ENCODE measurements at regions of chr6 and their contacts with region 1.

Region 1: DNA sequence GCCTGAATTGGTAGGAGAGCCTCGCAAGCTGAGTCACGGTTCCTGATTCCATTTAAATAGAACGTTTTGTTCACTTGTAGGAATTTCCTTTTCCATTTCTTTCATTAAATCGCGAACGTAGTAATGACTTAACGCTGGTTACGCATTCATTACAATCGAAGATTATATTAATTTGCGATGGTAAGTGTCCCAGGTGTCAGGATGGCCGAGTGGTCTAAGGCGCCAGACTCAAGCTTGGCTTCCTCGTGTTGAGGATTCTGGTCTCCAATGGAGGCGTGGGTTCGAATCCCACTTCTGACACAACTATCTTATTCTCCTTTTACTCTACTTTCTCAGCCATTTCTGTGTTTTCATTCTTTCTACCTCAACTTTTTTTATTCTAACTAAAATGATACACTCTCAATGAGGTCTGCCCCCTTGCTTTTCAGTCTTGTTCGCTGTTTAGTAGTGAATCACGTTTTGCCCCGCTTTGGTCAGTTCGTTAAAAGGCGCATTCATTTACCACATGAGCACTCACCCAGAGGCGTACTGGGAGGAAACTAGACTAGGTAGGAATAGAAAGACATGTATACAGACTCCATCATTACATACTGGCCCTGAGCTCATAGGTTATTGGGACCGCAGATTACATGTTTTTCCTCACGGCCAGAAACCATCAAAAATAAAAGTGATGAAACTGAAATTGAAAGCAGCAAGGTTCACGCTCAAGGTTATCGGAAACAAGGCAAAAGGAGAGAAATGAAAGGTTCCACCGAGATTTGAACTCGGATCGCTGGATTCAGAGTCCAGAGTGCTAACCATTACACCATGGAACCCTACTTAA is 17.3 kb upstream of the TRIM27 start:
- DNase-seq: peak; percentile 87
- H3K4me3 Mint-ChIP-seq: peak overlapping the region; percentile 94
- H3K27ac Mint-ChIP-seq: peak overlapping the region; percentile 97
- H3K4me1 Mint-ChIP-seq: peaks cover 45% of the 10 kb centered on the region
- H3K27me3 Mint-ChIP-seq: peaks cover 11% of the 10 kb centered on the region
- CTCF ChIP-seq: no peak

Region 2: DNA sequence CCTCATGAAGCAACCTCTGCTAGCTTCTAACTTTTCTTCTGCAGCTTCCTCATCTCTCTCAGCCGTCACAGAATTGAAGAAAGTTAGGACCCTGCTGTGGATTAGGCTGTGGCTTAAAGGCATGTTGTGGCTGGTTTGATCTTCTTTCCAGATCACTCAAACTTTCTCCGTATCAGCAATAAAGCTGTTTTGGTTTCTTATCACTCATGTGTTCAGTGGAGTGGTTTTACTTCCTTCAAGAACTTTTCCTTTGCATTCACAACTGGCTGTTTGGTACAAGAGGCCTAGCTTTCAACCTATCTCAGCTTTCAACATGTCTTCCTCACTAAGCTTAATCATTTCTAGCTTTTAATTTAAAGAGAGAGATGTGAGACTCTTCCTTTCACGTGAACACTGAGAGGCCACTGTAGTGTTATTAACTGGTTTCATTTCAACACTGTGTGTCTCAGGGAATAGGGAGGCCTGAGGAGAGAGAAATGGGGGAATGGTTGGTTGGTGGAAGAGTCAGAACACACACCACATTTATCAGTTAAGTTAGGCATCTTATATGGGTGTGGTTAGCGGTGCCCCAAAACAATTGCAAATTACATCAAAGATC is 515.0 kb before region 1 on chr6:
- CTCF ChIA-PET with region 1: no interaction called
- intact Hi-C with region 1: no loop called
- DNase-seq: no peak
- H3K4me3 Mint-ChIP-seq: no peak overlapping the region
- H3K27ac Mint-ChIP-seq: no peak overlapping the region
- H3K4me1 Mint-ChIP-seq: no peaks in the 10 kb centered on the region
- H3K27me3 Mint-ChIP-seq: peaks cover 10% of the 10 kb centered on the region
- CTCF ChIP-seq: no peak

Region 3: GRCh38 chr6:28725890-28726348 is 215.2 kb before region 1 on chr6:
- CTCF ChIA-PET with region 1: no interaction called
- intact Hi-C with region 1: loop called (anchors 10 kb)
- DNase-seq: peak; percentile 38
- H3K4me3 Mint-ChIP-seq: no peak overlapping the region
- H3K27ac Mint-ChIP-seq: no peak overlapping the region
- H3K4me1 Mint-ChIP-seq: no peaks in the 10 kb centered on the region
- H3K27me3 Mint-ChIP-seq: peaks cover under 1% of the 10 kb centered on the region
- CTCF ChIP-seq: no peak

Region 4: GRCh38 chr6:28863604-28864320 is 77.3 kb before region 1 on chr6:
- CTCF ChIA-PET with region 1: no interaction called
- intact Hi-C with region 1: loop called (anchors 5 kb)
- DNase-seq: peak; percentile 89
- H3K4me3 Mint-ChIP-seq: peak overlapping the region; percentile 94
- H3K27ac Mint-ChIP-seq: peak overlapping the region; percentile 95
- H3K4me1 Mint-ChIP-seq: peaks cover 23% of the 10 kb centered on the region
- H3K27me3 Mint-ChIP-seq: peaks cover 14% of the 10 kb centered on the region
- CTCF ChIP-seq: no peak

Region 5: GRCh38 chr6:28895134-28895812 is 45.8 kb before region 1 on chr6:
- CTCF ChIA-PET with region 1: interaction called, 4 read pairs
- intact Hi-C with region 1: loop called (anchors 2 kb)
- DNase-seq: peak; percentile 90
- H3K4me3 Mint-ChIP-seq: peak overlapping the region; percentile 95
- H3K27ac Mint-ChIP-seq: peak overlapping the region; percentile 100
- H3K4me1 Mint-ChIP-seq: no peaks in the 10 kb centered on the region
- H3K27me3 Mint-ChIP-seq: no peaks in the 10 kb centered on the region
- CTCF ChIP-seq: no peak

Region 6: DNA sequence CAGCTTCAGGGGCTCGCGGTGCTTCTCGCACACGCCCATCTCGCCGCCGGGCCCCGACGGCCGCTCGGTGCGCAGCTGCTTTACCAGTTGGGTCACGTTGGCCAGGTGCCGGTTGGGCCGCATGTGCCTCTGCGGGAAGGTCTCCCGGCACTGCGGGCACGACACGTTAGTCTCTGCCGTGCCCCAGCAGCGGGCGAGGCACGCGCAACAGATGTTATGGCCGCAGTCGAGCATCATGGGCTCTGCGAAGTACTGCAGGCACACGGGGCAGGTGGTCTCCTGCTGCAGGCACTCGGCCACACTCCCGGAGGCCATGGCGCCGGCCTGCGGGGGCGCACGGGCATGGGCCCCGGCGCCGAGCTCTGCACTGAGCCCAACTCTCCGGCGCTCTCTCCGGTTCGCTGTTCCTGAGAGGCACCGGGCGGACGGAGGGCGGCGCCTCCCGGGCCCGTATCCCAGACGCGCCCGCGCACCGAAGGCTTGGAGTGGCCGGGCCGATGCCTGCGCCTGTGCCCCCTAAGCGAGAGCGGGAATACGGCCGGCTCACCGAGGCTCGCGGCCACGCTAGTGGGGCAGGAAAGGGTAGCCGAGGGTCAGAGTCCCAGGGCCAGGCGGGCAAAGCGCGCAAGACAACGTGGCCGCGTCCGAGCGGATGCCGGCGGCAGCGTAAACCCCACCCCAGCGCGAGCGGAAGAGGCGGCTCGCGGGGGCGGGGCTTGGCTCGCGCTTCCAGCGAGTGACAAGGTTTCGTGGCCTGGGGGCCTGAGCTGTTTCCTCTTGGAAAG is 17.6 kb before region 1 on chr6 and contains the start of gene TRIM27:
- CTCF ChIA-PET with region 1: interaction called, 5 read pairs
- intact Hi-C with region 1: loop called (anchors 2 kb)
- DNase-seq: peak; percentile 95
- H3K4me3 Mint-ChIP-seq: peak within 1 kb of the TSS; percentile 96
- H3K27ac Mint-ChIP-seq: peak within 1 kb of the TSS; percentile 98
- H3K4me1 Mint-ChIP-seq: peaks cover 27% of the 10 kb centered on the region
- H3K27me3 Mint-ChIP-seq: no peaks in the 10 kb centered on the region
- CTCF ChIP-seq: no peak
- total RNA-seq, gene TRIM27: 85.8 and 91.6 TPM in 2 replicates

Region 7: GRCh38 chr6:28969129-28969528 is 28.1 kb after region 1 on chr6:
- CTCF ChIA-PET with region 1: no interaction called
- intact Hi-C with region 1: no loop called
- DNase-seq: no peak
- H3K4me3 Mint-ChIP-seq: no peak overlapping the region
- H3K27ac Mint-ChIP-seq: no peak overlapping the region
- H3K4me1 Mint-ChIP-seq: no peaks in the 10 kb centered on the region
- H3K27me3 Mint-ChIP-seq: no peaks in the 10 kb centered on the region
- CTCF ChIP-seq: no peak

Region 8: DNA sequence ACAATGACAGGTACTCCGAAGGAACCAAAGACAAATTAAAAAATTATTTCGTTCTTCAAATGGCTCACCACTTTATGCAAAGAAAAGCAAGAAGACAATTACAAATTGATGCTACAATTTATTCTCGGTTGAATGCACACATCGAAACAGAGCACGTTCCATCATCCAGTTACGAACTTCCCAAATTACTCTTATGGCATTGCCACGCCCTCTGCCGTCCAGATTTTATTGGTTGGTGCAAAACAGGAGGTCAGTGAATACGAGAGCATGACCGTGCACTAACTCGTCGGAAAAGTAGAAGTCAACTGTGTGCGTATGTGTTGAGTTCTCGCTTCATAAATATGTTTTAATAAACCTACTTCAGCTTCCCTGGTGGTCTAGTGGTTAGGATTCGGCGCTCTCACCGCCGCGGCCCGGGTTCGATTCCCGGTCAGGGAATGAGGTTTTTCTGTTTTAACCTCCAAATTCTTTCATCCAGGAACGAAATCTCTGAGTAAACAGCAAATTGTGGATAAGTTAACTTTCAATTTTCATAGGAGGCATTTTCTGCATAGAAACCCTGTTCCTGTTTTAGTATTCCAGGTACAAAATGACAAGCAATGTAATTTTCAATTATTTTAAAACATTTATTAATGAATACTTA is 40.9 kb after region 1 on chr6:
- CTCF ChIA-PET with region 1: interaction called, 6 read pairs
- intact Hi-C with region 1: loop called (anchors 1 kb)
- DNase-seq: peak; percentile 81
- H3K4me3 Mint-ChIP-seq: peak overlapping the region; percentile 68
- H3K27ac Mint-ChIP-seq: peak overlapping the region; percentile 60
- H3K4me1 Mint-ChIP-seq: peaks cover 48% of the 10 kb centered on the region
- H3K27me3 Mint-ChIP-seq: no peaks in the 10 kb centered on the region
- CTCF ChIP-seq: no peak

Region 9: GRCh38 chr6:29016559-29017427 is 75.7 kb after region 1 on chr6:
- CTCF ChIA-PET with region 1: interaction called, 6 read pairs
- intact Hi-C with region 1: loop called (anchors 1 kb)
- DNase-seq: peak; percentile 88
- H3K4me3 Mint-ChIP-seq: peak overlapping the region; percentile 90
- H3K27ac Mint-ChIP-seq: peak overlapping the region; percentile 62
- H3K4me1 Mint-ChIP-seq: peaks cover 8% of the 10 kb centered on the region
- H3K27me3 Mint-ChIP-seq: peaks cover 4% of the 10 kb centered on the region
- CTCF ChIP-seq: peak; percentile 92

Measured in Calu3 (cell line).